Sigmoid colon (tissue), 7 donors: ENCODE measurements at regions of chr2 and their contacts with region 1.

Region 1: DNA sequence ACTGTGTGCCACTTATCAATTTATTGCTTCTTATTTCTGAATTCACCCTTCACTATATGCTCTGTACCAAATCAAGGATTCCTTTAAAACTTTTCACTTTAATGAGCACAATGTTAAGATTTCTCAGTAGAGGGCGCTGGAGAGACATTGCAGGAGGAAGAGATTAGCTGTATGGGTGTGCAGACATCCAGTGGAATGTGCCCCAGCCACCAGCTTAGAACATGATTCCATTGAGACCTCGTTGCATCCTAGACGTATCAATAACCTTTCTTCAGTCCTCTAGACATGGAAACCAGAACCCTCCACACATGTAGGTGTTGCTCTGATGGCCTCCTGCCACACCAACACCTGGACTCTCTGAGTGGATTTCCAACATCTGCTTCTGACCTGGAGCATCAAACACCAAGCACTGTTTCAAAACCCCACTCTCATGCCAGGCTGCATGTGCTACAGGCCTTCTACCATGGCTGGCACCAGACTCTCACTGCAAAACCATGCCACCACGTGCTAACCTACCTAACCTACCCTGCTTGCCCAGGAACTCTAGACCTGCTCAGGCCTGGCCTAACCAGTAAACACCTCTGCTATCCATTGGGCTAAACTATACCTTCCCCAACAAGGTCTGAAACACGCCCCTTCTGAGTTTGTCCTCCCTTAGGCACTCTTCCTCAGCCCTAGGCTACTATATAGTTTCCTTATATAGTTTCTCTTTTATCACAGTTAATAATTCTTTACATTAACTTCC is 633.2 kb upstream of the PKDCC start:
- DNase-seq: no peak
- H3K4me3 ChIP-seq: no peak overlapping the region
- H3K27ac ChIP-seq: no peak overlapping the region
- H3K4me1 ChIP-seq: peaks cover 0 to under 1% (median under 1%) of the 10 kb centered on the region in 4 donors
- H3K27me3 ChIP-seq: no peaks in the 10 kb centered on the region
- CTCF ChIP-seq: peak in 1 of 4 experiments; percentile 30
- EP300 ChIP-seq: no peak
- POLR2A ChIP-seq: no peak

Region 2: GRCh38 chr2:41496908-41497307 is 82.2 kb after region 1 on chr2:
- intact Hi-C with region 1: no loop called
- DNase-seq: no peak
- H3K4me3 ChIP-seq: no peak overlapping the region
- H3K27ac ChIP-seq: no peak overlapping the region
- H3K4me1 ChIP-seq: no peaks in the 10 kb centered on the region
- H3K27me3 ChIP-seq: no peaks in the 10 kb centered on the region
- CTCF ChIP-seq: no peak
- EP300 ChIP-seq: no peak
- POLR2A ChIP-seq: no peak

Region 3: GRCh38 chr2:41698678-41699422 is 284.2 kb after region 1 on chr2:
- intact Hi-C with region 1: loop called (anchors 10 kb)
- DNase-seq: peak; percentile 68
- H3K4me3 ChIP-seq: peak overlapping the region in 1 of 4 donors; percentile 8
- H3K27ac ChIP-seq: no peak overlapping the region
- H3K4me1 ChIP-seq: peaks cover 0 to 26% (median 10%) of the 10 kb centered on the region in 4 donors
- H3K27me3 ChIP-seq: no peaks in the 10 kb centered on the region
- CTCF ChIP-seq: peak; percentile 44 to 92 (median 63)
- EP300 ChIP-seq: no peak
- POLR2A ChIP-seq: no peak